AG04449 (cell line): ENCODE measurements at regions of chr7 and their contacts with region 1.

Region 1: GRCh38 chr7:95871078-95871782 is 98.9 kb downstream of the DYNC1I1 start:
- DNase-seq: peak; percentile 9
- H3K4me3 ChIP-seq: no peak overlapping the region
- CTCF ChIP-seq: peak; percentile 33

Region 2: DNA sequence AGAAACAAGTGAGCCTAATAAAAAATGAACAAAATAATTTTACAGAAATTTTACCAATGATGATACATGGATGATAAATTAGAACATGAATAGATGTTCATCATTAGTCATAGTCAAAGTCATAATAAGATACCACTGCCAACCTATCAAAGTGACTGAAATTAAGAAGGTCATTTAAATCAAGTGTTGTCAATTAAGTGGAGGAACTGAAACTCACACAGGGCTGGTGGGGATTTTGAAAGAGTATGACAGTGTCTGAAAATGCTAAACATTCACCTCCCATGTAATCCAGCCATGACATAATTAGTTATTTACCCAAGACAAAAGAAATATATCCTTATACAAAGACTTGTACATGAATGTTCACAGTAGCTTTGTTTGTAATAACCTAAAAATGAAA is 156.0 kb before region 1 on chr7:
- CTCF ChIA-PET with region 1: interaction called, 44 read pairs
- POLR2A ChIA-PET with region 1: no interaction called
- DNase-seq: no peak
- H3K4me3 ChIP-seq: no peak overlapping the region
- CTCF ChIP-seq: no peak

Region 3: GRCh38 chr7:95723592-95724180 is 147.5 kb before region 1 on chr7:
- CTCF ChIA-PET with region 1: interaction called, 44 read pairs
- POLR2A ChIA-PET with region 1: no interaction called
- DNase-seq: no peak
- H3K4me3 ChIP-seq: no peak overlapping the region
- CTCF ChIP-seq: no peak